Activated T-helper 2 cell treated with anti-CD3 and anti-CD28 coated beads, Interferon-gamma antibody, Interleukin-2, Interleukin-4, amounts not matched to agents 10 μg/mL and 5 μg/mL and 100 μg/mL, durations not matched to agents 14 hours and 24 hours and 36 hours (primary cell): ENCODE measurements at regions of chr7 and their contacts with region 1.

Region 1: DNA sequence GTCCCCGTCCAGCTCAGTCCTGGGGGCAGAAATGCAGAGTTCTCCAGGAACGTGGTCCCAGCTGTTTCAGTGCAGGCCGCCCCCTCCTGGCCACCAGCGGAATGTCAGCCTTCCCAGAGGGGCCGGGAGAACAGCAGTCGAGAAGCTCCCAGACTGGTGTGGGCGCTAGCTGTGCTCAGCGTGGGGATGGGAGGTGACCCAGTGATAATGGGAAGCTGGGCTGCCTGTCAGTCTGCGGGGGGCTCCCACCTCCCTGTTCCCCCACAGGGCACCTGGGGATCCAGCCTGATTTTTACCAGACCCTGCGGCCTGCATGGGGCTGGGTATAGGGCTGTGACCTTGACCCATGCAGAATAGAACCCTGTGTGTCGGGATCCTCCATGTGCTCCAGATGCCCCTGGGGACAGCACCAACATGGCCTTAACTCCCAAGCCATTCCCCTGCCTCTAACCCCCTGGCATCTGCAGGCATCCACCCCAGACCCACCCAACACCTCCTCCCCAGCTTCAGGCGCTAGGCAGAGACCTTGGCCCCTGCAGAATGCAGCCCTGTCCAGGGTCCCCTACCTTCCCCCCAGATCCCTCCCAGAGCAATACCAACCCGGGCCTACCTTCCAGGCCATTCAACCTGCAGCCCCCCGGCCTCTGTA is 946 bp upstream of the ELN start:
- DNase-seq: peak; percentile 41
- H3K4me3 Mint-ChIP-seq: no peak overlapping the region
- H3K27ac Mint-ChIP-seq: no peak overlapping the region
- H3K4me1 Mint-ChIP-seq: no peaks in the 10 kb centered on the region
- H3K27me3 Mint-ChIP-seq: peaks cover 49% of the 10 kb centered on the region

Region 2: DNA sequence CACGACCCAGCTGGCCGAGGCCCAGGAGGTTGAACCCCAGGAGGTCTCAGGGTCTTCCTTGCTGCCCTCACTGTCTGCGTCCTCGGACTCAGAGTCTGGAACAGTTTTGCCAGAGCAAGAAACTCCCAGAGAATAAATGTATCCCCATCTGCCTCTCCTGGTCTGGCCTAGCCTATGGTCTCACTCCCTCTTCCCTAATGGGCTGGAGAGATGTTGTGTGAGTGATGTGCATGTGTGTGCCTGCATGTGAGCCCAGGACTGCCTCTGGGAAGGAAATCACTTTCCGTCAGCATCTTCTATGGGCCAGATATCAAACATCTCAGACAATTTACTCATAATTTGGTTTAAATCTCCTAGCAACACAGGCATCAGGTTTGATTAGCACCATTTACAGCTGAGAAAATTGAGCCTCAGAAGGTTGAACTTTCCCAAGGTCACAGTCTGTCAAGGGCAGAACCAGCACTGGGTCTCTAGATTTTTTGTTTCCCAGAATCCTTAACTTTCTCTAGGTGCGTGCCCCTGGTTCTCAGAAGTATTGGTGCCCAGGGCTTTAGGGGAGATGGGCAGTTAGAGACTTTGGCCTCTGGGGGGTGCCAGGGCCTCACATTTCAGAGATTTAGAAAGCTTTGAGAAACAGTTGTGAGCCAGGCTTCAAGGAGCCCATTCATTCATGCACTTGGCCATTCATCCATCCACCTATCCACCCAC is 161.1 kb before region 1 on chr7:
- intact Hi-C with region 1: loop called (anchors 10 kb)
- DNase-seq: no peak
- H3K4me3 Mint-ChIP-seq: no peak overlapping the region
- H3K27ac Mint-ChIP-seq: no peak overlapping the region
- H3K4me1 Mint-ChIP-seq: no peaks in the 10 kb centered on the region
- H3K27me3 Mint-ChIP-seq: no peaks in the 10 kb centered on the region